ENCODE measurements at regions of chr1 and their contacts with region 1.

Region 1: DNA sequence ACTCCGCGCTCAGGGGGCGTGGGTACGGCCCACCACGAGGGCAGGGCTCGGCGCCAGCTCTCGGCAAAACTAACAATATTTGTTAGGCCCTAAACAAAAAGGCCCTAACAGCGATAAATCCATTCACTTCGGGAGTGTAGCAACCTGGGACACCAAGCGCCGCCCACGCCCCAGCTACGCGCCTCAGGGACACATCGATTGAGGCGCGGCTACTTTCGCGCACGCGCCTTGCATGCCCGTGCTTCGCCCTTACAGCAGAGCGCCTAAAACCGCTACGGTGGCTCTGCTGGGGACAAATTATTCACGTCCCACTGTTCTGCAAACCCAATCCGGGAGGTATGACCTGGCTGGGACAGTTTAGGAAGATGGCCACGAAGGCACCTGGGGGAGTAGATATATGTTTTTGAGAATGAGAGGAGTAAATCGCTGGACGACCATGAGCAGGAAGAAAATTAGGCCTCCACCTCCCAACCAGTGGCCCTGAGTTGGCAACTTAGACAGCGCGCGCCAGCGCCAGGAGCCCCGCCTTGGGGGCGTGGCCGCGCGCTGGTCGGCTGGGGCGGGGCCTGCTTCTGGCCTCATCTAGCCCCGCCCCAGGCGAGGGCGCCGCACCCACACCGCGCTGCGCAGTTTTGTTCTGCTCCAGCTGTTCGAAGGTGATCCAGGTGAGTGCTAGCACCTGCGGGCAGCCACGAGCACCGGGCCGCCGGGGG is at the start of gene MGST3:
- DNase-seq: peak; percentile 98
- H3K4me3 Mint-ChIP-seq: no peak within 1 kb of the TSS
- H3K27ac Mint-ChIP-seq: no peak within 1 kb of the TSS
- H3K4me1 Mint-ChIP-seq: peaks cover 17% of the 10 kb centered on the region
- H3K27me3 Mint-ChIP-seq: peaks cover 10% of the 10 kb centered on the region
- total RNA-seq, gene MGST3: 25.7 and 28.1 TPM in 2 replicates

Region 2: DNA sequence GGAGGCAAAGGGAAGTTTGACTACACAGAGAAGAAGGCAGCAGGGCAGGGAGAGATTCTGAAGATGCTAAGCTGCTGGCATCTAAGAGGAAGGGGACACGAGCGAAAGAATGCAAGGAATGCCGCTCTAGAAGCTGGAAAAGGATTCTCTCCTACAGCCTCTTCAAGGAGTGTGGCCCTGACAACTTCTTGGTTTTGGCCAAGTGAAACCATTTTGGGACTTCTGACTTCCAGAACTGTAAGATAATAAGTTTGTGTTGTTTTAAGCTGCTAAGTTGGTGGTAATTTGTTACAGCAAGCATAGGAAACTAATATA is 28.8 kb after region 1 on chr1:
- intact Hi-C with region 1: no loop called
- DNase-seq: no peak
- H3K4me3 Mint-ChIP-seq: no peak overlapping the region
- H3K27ac Mint-ChIP-seq: no peak overlapping the region
- H3K4me1 Mint-ChIP-seq: no peaks in the 10 kb centered on the region
- H3K27me3 Mint-ChIP-seq: no peaks in the 10 kb centered on the region

Region 3: GRCh38 chr1:165697881-165698760 is 67.3 kb after region 1 on chr1 and contains the start of gene ALDH9A1:
- intact Hi-C with region 1: loop called (anchors 2 kb)
- DNase-seq: peak; percentile 96
- H3K4me3 Mint-ChIP-seq: peak within 1 kb of the TSS; percentile 91
- H3K27ac Mint-ChIP-seq: peak within 1 kb of the TSS; percentile 96
- H3K4me1 Mint-ChIP-seq: peaks cover 21% of the 10 kb centered on the region
- H3K27me3 Mint-ChIP-seq: peaks cover 2% of the 10 kb centered on the region
- total RNA-seq, gene ALDH9A1: 41.8 and 43.8 TPM in 2 replicates

Region 4: DNA sequence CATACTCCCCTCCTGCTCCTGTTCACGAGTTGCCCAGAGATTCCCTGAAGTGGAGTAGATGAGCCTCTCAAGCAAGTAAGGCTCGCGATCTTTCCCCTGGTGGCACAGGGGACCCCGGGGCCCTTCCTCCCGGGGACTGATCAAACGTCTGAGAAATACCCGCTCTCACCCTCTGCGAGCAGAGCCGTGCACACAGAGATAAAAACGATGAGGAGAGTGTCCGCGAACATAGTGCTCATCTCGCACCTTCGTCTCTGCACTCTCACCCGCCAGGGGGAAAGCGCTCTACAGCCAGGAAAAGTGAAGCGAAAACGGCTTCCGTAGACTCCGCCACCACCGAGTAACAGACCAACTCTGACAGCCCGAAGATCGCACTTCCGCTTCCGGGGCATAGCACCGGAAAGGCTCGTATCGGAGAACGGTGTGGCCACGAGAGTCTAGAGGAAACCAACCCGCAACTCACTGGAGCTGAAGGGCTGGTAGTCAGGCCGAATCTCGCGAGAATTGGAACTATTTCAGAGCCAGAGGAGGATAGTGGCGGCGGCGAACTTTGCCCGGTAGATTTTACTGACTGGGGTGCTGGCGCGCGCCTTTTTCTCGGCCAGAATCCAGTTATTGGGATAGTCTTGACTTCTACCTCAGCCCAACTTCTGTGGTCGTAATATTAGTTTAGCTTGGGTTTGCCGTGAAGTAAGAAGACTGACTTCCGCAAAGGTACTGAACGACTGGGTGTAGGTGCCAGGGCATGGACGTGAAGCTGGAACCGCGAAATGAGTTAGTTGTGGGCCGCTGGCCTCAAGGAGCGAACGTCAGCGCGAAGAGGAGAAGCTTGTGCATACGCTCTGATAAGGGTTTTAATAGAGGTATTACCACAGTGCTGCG is 138.0 kb after region 1 on chr1 and contains the start of gene TMCO1:
- intact Hi-C with region 1: loop called (anchors 2 kb)
- DNase-seq: peak; percentile 98
- H3K4me3 Mint-ChIP-seq: peak within 1 kb of the TSS; percentile 98
- H3K27ac Mint-ChIP-seq: peak within 1 kb of the TSS; percentile 100
- H3K4me1 Mint-ChIP-seq: peaks cover 41% of the 10 kb centered on the region
- H3K27me3 Mint-ChIP-seq: no peaks in the 10 kb centered on the region
- total RNA-seq, gene TMCO1: 91.8 and 94.3 TPM in 2 replicates

Region 5: GRCh38 chr1:165884690-165885304 is 254.0 kb after region 1 on chr1:
- intact Hi-C with region 1: no loop called
- DNase-seq: no peak
- H3K4me3 Mint-ChIP-seq: no peak overlapping the region
- H3K27ac Mint-ChIP-seq: no peak overlapping the region
- H3K4me1 Mint-ChIP-seq: peaks cover 32% of the 10 kb centered on the region
- H3K27me3 Mint-ChIP-seq: no peaks in the 10 kb centered on the region